ENCODE measurements at regions of chr15 and their contacts with region 1.

Region 1: DNA sequence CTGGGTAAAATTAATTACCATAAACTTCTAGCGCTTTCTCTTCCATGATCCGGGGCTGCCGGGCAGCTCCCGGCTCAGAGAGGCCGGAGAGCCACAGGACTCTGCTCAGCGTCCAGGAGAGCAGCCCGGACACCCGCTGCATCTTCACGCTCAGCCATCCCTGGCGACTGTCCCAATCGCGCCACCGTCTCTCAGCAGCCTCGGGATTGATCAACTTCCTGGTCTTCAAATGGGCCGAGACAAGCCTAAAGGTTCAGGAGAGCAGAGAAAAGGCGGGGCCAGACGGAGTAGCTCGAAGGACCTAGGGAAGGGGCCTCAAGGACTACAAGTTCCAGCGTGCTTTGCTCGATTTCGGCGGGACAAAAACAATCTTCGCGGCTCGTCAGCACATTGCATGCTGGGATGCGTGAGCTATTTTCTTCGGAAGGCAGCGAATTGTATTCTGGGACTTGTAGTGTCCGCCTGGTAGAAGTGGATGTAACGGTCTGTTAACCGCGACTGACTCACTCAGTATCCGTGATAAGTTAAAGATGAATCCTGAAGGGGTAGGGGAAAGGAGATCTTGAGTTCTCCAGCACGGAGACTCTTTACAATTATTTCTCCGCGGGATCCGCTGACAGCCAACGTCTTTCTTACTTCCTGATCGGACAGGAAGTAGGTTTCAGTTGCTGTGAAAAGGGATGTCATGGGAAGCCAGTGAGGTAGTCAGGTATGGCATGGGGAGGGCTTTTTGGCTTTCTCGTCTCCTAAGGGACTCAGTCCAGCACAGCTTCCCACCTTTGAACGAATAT is at the start of gene CIAO2A:
- DNase-seq: peak; percentile 92
- H3K4me3 Mint-ChIP-seq: peak within 1 kb of the TSS; percentile 96
- H3K27ac Mint-ChIP-seq: peak within 1 kb of the TSS; percentile 92
- H3K4me1 Mint-ChIP-seq: peaks cover 46% of the 10 kb centered on the region
- H3K27me3 Mint-ChIP-seq: no peaks in the 10 kb centered on the region
- total RNA-seq, gene CIAO2A: 70.1 and 87.1 TPM in 2 replicates

Region 2: DNA sequence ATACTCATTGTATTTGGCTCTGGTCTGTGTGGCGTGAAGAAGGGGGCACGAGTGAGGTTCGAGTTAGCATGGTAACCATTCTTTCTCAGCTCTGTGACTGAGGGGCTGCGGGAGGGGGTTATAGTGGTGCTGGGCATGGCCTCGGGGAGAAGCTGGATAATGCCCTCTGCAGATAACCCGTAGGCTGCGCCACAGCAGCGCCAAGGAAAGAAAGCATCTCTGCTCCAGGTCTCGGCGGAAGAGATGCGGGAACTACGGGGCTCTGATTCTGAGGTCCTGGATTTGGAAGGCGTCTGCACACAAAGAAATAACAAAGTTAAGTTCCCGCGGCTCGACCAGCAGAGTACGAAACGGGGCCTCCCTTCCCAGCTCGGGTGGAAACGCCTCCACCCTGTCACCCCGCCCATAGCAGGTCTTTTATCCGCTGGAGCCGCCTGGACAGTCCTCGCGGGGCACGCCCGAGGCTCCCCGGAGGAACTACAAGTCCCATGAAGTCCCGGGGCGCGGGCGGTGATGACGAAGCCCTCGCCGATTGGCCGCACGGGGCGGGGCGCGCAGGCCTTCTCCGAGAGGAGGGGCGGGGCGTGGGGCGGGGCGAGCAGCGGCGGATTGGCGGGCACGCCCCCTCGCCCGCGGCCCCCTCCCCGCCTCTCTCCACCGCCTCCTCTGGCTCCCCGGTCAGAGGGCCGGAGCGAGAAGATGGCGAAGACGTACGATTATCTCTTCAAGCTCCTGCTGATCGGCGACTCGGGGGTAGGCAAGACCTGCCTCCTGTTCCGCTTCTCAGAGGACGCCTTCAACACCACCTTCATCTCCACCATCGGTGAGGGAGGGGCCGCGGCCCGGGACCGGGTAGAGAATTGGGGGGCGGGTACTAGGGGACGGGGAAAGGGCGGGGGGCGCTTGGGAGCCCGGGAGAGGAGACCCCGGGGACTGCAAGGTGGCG is 904.6 kb before region 1 on chr15 and contains the start of gene RAB8B:
- intact Hi-C with region 1: loop called (anchors 1 kb)
- DNase-seq: peak; percentile 95
- H3K4me3 Mint-ChIP-seq: peak within 1 kb of the TSS; percentile 96
- H3K27ac Mint-ChIP-seq: peak within 1 kb of the TSS; percentile 92
- H3K4me1 Mint-ChIP-seq: peaks cover 48% of the 10 kb centered on the region
- H3K27me3 Mint-ChIP-seq: peaks cover 10% of the 10 kb centered on the region
- total RNA-seq, gene RAB8B: 135 and 149 TPM in 2 replicates

Region 3: DNA sequence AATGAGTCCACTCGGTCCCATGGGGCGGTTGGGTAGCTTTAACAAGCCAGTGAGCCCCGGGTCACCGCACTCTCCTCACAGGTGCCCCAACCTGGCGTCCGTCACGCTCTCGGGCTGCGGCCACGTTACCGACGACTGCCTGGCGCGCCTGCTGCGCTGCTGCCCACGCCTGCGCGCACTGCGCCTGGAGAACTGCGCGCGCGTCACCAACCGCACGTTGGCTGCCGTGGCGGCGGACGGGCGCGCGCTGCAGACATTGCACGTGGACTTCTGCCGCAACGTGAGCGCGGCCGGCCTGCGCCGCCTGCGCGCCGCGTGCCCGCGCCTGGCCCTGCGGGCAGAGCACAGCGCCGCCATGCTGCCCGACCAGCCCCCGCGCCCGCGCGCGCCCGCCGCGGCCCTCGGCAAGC is 493.2 kb before region 1 on chr15:
- intact Hi-C with region 1: loop called (anchors 2 kb)
- DNase-seq: peak; percentile 86
- H3K4me3 Mint-ChIP-seq: peak overlapping the region; percentile 88
- H3K27ac Mint-ChIP-seq: peak overlapping the region; percentile 87
- H3K4me1 Mint-ChIP-seq: peaks cover 51% of the 10 kb centered on the region
- H3K27me3 Mint-ChIP-seq: peaks cover 2% of the 10 kb centered on the region

Region 4: DNA sequence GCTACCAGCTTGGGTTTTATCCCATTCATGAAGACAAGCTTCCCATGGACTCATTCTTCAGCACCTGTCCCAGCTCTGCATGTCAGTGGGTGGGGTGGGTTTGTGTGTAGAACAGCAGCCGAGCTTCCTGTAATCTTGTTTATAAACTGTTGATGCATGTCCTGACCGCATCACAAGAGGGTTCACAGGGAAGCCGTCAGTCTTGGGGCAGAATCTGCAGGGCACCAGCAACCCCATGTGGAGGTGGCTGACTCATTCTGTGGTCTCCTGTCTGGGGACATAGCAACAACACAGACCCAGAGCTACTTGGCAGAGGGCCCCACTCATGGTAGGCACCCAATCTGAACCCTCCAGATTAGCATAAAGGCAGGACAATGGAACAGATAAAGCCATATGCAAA is 83.1 kb before region 1 on chr15:
- intact Hi-C with region 1: loop called (anchors 2 kb)
- DNase-seq: peak; percentile 79
- H3K4me3 Mint-ChIP-seq: peak overlapping the region; percentile 64
- H3K27ac Mint-ChIP-seq: peak overlapping the region; percentile 87
- H3K4me1 Mint-ChIP-seq: peaks cover 61% of the 10 kb centered on the region
- H3K27me3 Mint-ChIP-seq: no peaks in the 10 kb centered on the region

Region 5: GRCh38 chr15:64162870-64163658 is 69.2 kb after region 1 on chr15 and contains the start of gene PPIB:
- intact Hi-C with region 1: loop called (anchors 1 kb)
- DNase-seq: peak; percentile 97
- H3K4me3 Mint-ChIP-seq: peak within 1 kb of the TSS; percentile 94
- H3K27ac Mint-ChIP-seq: peak within 1 kb of the TSS; percentile 93
- H3K4me1 Mint-ChIP-seq: peaks cover 56% of the 10 kb centered on the region
- H3K27me3 Mint-ChIP-seq: no peaks in the 10 kb centered on the region
- total RNA-seq, gene PPIB: 383 and 388 TPM in 2 replicates

Region 6: DNA sequence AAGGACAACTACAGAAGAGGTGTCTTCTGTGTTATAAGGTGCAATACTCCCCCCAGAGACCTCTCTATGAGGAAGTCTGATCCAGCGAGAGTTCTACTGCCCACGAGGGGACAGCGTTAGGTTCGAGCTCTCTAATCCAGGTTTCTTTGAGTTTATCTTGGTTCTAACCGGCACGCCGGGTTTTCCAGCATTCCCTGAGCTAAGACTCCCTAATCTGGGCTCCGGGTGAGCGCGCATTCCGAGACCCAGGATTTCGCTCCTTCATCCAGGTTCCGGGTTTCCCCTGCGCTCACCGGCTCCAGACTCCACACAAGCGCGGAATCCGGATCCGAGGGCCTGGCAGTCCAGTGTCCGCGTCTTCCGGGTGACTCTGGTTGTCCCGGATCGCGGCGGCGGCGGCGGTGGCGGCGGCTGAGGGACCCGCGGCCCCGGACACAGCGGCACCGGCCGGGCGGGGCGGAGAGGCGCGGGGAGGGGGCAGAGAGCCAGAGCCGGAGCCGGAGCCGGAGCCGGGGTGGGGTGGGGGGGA is 366.4 kb after region 1 on chr15 and contains the start of gene ZNF609:
- intact Hi-C with region 1: loop called (anchors 10 kb)
- DNase-seq: peak; percentile 86
- H3K4me3 Mint-ChIP-seq: peak within 1 kb of the TSS; percentile 88
- H3K27ac Mint-ChIP-seq: peak within 1 kb of the TSS; percentile 86
- H3K4me1 Mint-ChIP-seq: peaks cover 70% of the 10 kb centered on the region
- H3K27me3 Mint-ChIP-seq: peaks cover 1% of the 10 kb centered on the region
- total RNA-seq, gene ZNF609: 65.4 and 73.8 TPM in 2 replicates